ENCODE measurements at regions of chr15 and their contacts with region 1.

Region 1: GRCh38 chr15:56040081-56041035 is 46.9 kb upstream of the NEDD4 start:
- H3K4me3 ChIP-seq: no peak overlapping the region
- H3K27ac ChIP-seq: peak overlapping the region; percentile 78
- H3K4me1 ChIP-seq: peaks cover 12% of the 10 kb centered on the region; the same call in 1 of the 2 replicates
- CTCF ChIP-seq: no peak

Region 2: DNA sequence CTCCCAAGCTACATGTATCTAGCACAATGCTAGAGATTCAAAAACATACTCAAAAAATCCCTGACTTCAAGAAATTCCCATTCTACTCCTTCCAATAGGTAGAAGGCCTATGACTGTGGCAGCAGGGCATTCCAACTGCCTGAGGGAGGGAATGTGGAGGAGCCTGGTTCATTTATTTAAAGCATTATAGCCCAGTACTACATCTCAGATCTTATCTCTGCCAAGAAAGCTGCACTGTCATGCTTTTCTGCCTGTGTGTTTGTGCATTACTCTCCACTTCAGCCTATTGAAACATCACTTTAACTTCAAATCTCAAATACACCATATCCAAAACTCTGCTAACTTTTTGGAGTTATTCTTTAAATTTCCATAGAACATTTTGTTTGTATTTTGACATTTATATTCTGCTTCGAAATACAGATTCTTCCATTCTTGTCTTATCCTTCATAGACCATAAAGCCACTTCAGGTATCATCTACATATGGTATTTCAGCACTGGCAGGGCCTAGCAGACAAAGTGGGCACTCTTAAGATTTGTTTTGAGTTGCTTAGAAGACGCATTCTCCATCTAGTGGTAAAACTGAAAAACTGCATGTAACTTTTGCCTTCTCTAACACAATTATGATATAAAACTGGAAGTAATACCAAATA is 12.2 kb after region 1 on chr15:
- CTCF ChIA-PET with region 1: interaction called, 11 read pairs
- POLR2A ChIA-PET with region 1: no interaction called
- H3K4me3 ChIP-seq: no peak overlapping the region
- H3K27ac ChIP-seq: no peak overlapping the region
- H3K4me1 ChIP-seq: no peaks in the 10 kb centered on the region
- CTCF ChIP-seq: 0 out of 2 replicates have a peak, but pooled peaks have one; percentile 22

Region 3: DNA sequence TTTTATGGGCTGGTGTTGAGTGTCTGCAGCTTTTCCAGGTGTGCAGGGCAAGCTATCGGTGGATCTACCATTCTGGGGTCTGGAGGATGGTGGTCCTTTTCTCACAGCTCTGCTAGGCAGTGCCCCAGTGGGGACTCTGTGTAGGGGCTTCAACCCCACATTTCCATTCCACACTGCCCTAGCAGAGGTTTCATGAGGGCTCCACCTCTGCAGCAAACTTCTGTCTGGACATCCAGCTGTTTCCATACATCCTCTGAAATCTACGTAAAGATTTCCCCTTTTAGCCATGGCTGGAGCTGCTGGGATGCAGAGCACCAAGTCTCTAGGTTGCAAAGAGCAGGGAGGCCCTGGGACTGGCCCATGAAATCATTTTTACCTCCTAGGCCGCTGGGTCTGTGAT is 191.7 kb after region 1 on chr15:
- CTCF ChIA-PET with region 1: no interaction called
- POLR2A ChIA-PET with region 1: no interaction called
- H3K4me3 ChIP-seq: no peak overlapping the region
- H3K27ac ChIP-seq: no peak overlapping the region
- H3K4me1 ChIP-seq: no peaks in the 10 kb centered on the region
- CTCF ChIP-seq: no peak

Measured in HEK293 (cell line).